ENCODE measurements at regions of chrX and their contacts with region 1.

Region 1: DNA sequence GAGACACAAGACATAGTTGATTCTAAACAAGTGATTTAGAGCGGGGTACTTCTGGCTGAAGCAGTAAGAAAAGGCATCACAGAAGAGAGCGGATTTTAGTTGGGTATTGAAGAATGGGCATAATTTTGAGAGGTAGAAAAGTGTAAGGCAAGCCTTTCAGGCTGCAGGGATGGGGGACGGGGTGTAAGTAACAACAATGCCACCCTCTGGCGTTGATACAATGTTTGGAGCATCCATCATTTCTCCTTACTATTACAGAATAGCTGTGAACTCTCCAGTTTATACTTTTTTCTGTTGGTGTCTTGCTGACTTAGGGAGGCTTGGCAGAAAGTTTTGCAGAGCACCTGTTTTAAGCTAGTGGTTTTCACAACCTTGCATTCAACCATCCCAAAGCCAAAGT is 78.5 kb upstream of the PRR32 start:
- DNase-seq: peak; percentile 27
- H3K4me3 Mint-ChIP-seq: no peak overlapping the region
- H3K27ac Mint-ChIP-seq: no peak overlapping the region
- H3K4me1 Mint-ChIP-seq: no peaks in the 10 kb centered on the region
- H3K27me3 Mint-ChIP-seq: no peaks in the 10 kb centered on the region
- CTCF ChIP-seq: peak; percentile 31

Region 2: GRCh38 chrX:125436855-125437254 is 1304.2 kb before region 1 on chrX:
- CTCF ChIA-PET with region 1: no interaction called
- POLR2A ChIA-PET with region 1: no interaction called
- intact Hi-C with region 1: loop called (anchors 10 kb)
- DNase-seq: peak; percentile 49
- H3K4me3 Mint-ChIP-seq: no peak overlapping the region
- H3K27ac Mint-ChIP-seq: no peak overlapping the region
- H3K4me1 Mint-ChIP-seq: no peaks in the 10 kb centered on the region
- H3K27me3 Mint-ChIP-seq: no peaks in the 10 kb centered on the region
- CTCF ChIP-seq: peak; percentile 42

Region 3: DNA sequence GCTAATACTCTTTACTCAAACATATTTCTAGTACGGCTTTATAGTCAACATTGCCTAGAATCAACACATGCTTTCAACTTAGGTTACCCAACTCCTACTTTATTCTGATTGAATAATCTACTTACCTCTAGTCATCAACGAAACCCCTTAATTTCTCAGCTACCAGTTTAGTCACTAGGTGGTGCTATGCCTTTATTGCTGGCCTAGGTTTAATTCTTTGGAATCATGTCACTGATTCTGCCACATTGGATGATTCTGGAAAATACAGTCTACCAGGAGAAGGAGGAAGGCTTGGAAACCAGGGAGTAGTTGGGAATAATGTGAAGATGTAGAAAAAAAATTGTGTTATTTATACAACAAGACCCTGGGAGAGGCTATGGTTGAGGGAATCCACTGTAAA is 742.6 kb before region 1 on chrX:
- CTCF ChIA-PET with region 1: interaction called, 14 read pairs
- POLR2A ChIA-PET with region 1: no interaction called
- intact Hi-C with region 1: no loop called
- DNase-seq: peak; percentile 49
- H3K4me3 Mint-ChIP-seq: no peak overlapping the region
- H3K27ac Mint-ChIP-seq: no peak overlapping the region
- H3K4me1 Mint-ChIP-seq: no peaks in the 10 kb centered on the region
- H3K27me3 Mint-ChIP-seq: no peaks in the 10 kb centered on the region
- CTCF ChIP-seq: peak; percentile 42

Region 4: GRCh38 chrX:126137899-126138298 is 603.2 kb before region 1 on chrX:
- CTCF ChIA-PET with region 1: interaction called, 3 read pairs
- POLR2A ChIA-PET with region 1: no interaction called
- intact Hi-C with region 1: loop called (anchors 1 kb)
- DNase-seq: peak; percentile 24
- H3K4me3 Mint-ChIP-seq: no peak overlapping the region
- H3K27ac Mint-ChIP-seq: no peak overlapping the region
- H3K4me1 Mint-ChIP-seq: no peaks in the 10 kb centered on the region
- H3K27me3 Mint-ChIP-seq: no peaks in the 10 kb centered on the region
- CTCF ChIP-seq: peak; percentile 26

Region 5: GRCh38 chrX:126376465-126376864 is 364.6 kb before region 1 on chrX:
- CTCF ChIA-PET with region 1: no interaction called
- POLR2A ChIA-PET with region 1: no interaction called
- intact Hi-C with region 1: no loop called
- DNase-seq: no peak
- H3K4me3 Mint-ChIP-seq: no peak overlapping the region
- H3K27ac Mint-ChIP-seq: no peak overlapping the region
- H3K4me1 Mint-ChIP-seq: no peaks in the 10 kb centered on the region
- H3K27me3 Mint-ChIP-seq: no peaks in the 10 kb centered on the region
- CTCF ChIP-seq: no peak

Region 6: GRCh38 chrX:126723881-126724280 is 17.2 kb before region 1 on chrX:
- CTCF ChIA-PET with region 1: no interaction called
- POLR2A ChIA-PET with region 1: no interaction called
- intact Hi-C with region 1: no loop called
- DNase-seq: no peak
- H3K4me3 Mint-ChIP-seq: no peak overlapping the region
- H3K27ac Mint-ChIP-seq: no peak overlapping the region
- H3K4me1 Mint-ChIP-seq: no peaks in the 10 kb centered on the region
- H3K27me3 Mint-ChIP-seq: no peaks in the 10 kb centered on the region
- CTCF ChIP-seq: no peak

Measured in MCF 10A (cell line).